CD4-positive, alpha-beta memory T cell (primary cell): ENCODE measurements at regions of chr6 and their contacts with region 1.

Region 1: GRCh38 chr6:42879372-42880239 is at the start of gene RPL7L1:
- DNase-seq: peak; percentile 88 to 93 (median 91)
- H3K4me3 ChIP-seq: peak within 1 kb of the TSS; percentile 77 to 84
- H3K4me3 Mint-ChIP-seq: peak within 1 kb of the TSS; percentile 94 to 99 (median 96)
- H3K27ac ChIP-seq: peak within 1 kb of the TSS; percentile 93
- H3K27ac Mint-ChIP-seq: peak within 1 kb of the TSS; percentile 97 to 100 (median 99)
- H3K4me1 ChIP-seq: peaks cover 23% of the 10 kb centered on the region
- H3K4me1 Mint-ChIP-seq: peaks cover 7 to 39% (median 25%) of the 10 kb centered on the region in 4 donors
- H3K27me3 ChIP-seq: no peaks in the 10 kb centered on the region
- H3K27me3 Mint-ChIP-seq: no peaks in the 10 kb centered on the region
- total RNA-seq, gene RPL7L1: 89.2 to 89.8 TPM

Region 2: GRCh38 chr6:42563697-42564505 is 315.7 kb before region 1 on chr6 and contains the start of gene UBR2:
- CTCF ChIA-PET with region 1: interaction called, 4 read pairs
- POLR2A ChIA-PET with region 1: interaction called, 23 read pairs
- intact Hi-C with region 1: loop called (anchors 1 kb)
- DNase-seq: peak; percentile 92 to 98 (median 95)
- H3K4me3 ChIP-seq: peak within 1 kb of the TSS; percentile 98 to 100
- H3K4me3 Mint-ChIP-seq: peak within 1 kb of the TSS; percentile 92 to 100 (median 98)
- H3K27ac ChIP-seq: peak within 1 kb of the TSS; percentile 94
- H3K27ac Mint-ChIP-seq: peak within 1 kb of the TSS; percentile 90 to 98 (median 96)
- H3K4me1 ChIP-seq: peaks cover 33% of the 10 kb centered on the region
- H3K4me1 Mint-ChIP-seq: peaks cover 21 to 43% (median 28%) of the 10 kb centered on the region in 4 donors
- H3K27me3 ChIP-seq: no peaks in the 10 kb centered on the region
- H3K27me3 Mint-ChIP-seq: peaks cover 0 to 1% of the 10 kb centered on the region in 2 donors
- total RNA-seq, gene UBR2: 55.0 to 55.7 TPM

Region 3: GRCh38 chr6:42726485-42727086 is 153.0 kb before region 1 on chr6:
- CTCF ChIA-PET with region 1: interaction called, 19 read pairs
- POLR2A ChIA-PET with region 1: interaction called, 21 read pairs
- intact Hi-C with region 1: loop called (anchors 1 kb)
- DNase-seq: peak; percentile 79 to 89 (median 81)
- H3K4me3 ChIP-seq: peak overlapping the region; percentile 53 to 55
- H3K4me3 Mint-ChIP-seq: peak overlapping the region; percentile 83 to 98 (median 92)
- H3K27ac ChIP-seq: peak overlapping the region; percentile 69
- H3K27ac Mint-ChIP-seq: peak overlapping the region; percentile 86 to 99 (median 98)
- H3K4me1 ChIP-seq: peaks cover 16% of the 10 kb centered on the region
- H3K4me1 Mint-ChIP-seq: peaks cover 11 to 24% (median 18%) of the 10 kb centered on the region in 4 donors
- H3K27me3 ChIP-seq: no peaks in the 10 kb centered on the region
- H3K27me3 Mint-ChIP-seq: no peaks in the 10 kb centered on the region

Region 4: DNA sequence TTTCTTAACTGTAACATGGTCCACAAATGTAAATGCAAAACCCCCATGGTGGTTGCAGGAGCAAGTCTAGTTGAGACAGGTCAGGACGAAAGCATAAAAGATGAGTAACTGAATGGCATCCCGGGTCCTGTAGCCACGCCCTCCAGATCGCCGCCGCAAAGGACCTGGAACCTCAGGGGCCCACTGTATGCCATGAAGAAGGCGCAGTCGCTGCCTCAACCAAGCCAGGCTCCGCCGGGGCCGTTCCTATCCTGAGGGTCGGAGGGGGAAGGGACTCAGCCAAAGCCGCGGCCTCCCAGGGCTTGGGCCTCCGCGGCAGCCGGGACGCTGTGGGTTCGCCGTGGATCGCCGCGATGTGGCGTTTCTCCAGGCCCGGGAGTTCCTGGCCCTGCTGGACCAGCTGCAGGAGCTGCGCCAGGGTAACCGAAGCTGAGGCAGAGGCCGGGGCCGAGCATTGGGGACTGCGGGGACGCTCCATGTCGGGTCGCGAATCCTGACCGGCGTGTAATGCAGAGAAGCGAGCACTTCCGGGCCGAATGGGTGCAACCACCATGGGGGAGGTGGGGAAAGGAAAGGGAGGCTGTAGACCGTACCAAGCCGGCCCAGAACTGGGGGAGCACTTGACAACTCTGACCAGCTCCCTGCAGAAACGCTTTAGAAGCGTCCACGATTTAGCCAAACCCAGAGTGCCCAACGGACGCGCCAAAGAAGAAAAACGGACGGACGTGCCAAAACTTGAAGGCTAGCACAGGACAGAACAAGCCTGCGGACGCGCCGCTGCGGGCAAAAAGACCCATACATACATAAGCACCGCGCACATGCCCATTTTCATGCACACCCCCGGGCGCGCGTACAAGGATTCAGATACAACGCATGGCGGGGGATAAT is 10.9 kb after region 1 on chr6:
- CTCF ChIA-PET with region 1: interaction called, 7 read pairs
- POLR2A ChIA-PET with region 1: interaction called, 91 read pairs
- intact Hi-C with region 1: loop called (anchors 1 kb)
- DNase-seq: peak; percentile 87 to 91 (median 89)
- H3K4me3 ChIP-seq: peak overlapping the region; percentile 59 to 97
- H3K4me3 Mint-ChIP-seq: peak overlapping the region; percentile 94 to 99 (median 98)
- H3K27ac ChIP-seq: peak overlapping the region; percentile 92
- H3K27ac Mint-ChIP-seq: peak overlapping the region; percentile 93 to 99 (median 97)
- H3K4me1 ChIP-seq: peaks cover 15% of the 10 kb centered on the region
- H3K4me1 Mint-ChIP-seq: peaks cover 9 to 21% (median 12%) of the 10 kb centered on the region in 4 donors
- H3K27me3 ChIP-seq: no peaks in the 10 kb centered on the region
- H3K27me3 Mint-ChIP-seq: no peaks in the 10 kb centered on the region

Region 5: DNA sequence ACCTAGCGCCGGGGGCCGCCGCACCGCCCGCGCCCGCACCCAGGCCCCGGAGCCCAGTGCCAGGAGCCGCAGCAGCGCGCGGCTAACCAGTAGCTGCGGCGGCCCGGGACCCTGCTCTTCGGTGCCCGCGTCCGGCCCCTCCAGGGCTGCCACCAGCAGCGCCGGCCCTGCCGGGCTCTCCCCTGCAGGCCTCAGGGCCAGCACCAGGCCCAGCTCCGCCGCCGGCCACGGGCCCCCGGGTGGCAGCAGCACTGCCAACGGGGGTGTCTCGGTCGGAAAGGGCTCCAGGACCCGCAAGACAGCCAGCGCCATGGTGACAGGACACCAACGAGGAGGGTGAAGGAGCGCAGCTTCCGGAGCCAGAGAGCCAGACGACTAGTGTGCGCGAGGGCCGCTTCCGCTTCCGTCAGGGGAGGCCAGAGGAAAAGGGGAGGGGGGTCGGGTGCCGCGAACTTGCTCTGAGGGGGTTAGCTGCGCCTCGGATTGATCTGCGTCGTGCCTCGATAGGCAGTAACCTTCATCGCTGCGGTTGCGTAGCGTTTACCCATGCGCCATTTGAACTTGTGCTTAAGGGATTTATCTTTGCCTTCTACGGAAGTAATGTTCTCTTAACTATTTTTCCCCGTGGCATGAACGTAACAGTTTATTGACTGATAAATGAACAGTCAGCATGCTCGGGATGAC is 99.4 kb after region 1 on chr6 and contains the start of gene PEX6:
- CTCF ChIA-PET with region 1: no interaction called
- POLR2A ChIA-PET with region 1: interaction called, 14 read pairs
- intact Hi-C with region 1: no loop called
- DNase-seq: peak; percentile 87 to 98 (median 92)
- H3K4me3 ChIP-seq: peak within 1 kb of the TSS; percentile 70 to 75
- H3K4me3 Mint-ChIP-seq: peak within 1 kb of the TSS; percentile 92 to 99 (median 96)
- H3K27ac ChIP-seq: peak within 1 kb of the TSS; percentile 77
- H3K27ac Mint-ChIP-seq: peak within 1 kb of the TSS; percentile 93 to 99 (median 98)
- H3K4me1 ChIP-seq: peaks cover 56% of the 10 kb centered on the region
- H3K4me1 Mint-ChIP-seq: peaks cover 30 to 63% (median 43%) of the 10 kb centered on the region in 4 donors
- H3K27me3 ChIP-seq: no peaks in the 10 kb centered on the region
- H3K27me3 Mint-ChIP-seq: no peaks in the 10 kb centered on the region
- total RNA-seq, gene PEX6: 38.9 to 40.5 TPM